ENCODE measurements at regions of chr1 and their contacts with region 1.

Region 1: DNA sequence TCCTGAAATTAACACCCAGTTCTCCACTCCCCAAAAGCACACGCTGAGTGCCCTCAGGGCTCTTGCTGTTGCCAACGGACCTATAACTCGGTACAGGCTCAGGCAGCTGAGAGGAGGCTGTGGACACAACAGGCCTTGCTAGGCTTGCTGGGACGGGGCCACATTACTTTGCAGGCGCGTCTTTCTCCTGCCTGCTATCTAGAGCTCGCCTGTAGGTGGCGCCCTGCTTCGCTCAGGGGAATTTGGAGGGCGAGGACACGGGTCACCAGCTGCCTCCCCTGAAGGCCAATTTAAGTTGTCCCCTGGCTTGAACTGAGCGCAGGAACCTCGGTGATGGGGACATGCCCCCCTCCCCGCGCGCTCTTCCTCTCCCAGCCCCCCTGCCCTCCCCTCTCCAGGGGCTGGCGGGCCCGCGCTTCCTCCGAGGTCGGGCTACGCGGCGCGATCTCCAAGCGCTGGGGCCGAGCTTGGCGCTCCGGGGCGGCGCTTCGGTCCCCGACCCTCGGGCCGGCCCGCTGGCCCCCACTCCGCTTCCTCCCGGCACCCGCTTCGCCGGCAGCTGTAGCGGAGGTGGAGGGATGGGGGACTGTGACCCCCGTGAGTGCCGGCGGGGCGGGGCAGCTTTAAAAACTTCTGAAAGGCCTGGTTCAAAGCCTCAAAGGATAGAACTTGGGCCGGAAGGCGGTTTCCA is 32.4 kb upstream of the NFIA start:
- DNase-seq: peak; percentile 81 to 94 (median 88)
- ATAC-seq: peak; percentile 79
- H3K4me3 ChIP-seq: peak overlapping the region; percentile 65 to 73
- H3K4me3 Mint-ChIP-seq: peak overlapping the region; percentile 84
- H3K27ac ChIP-seq: no peak overlapping the region
- H3K27ac Mint-ChIP-seq: no peak overlapping the region
- H3K4me1 ChIP-seq: peaks cover 22% of the 10 kb centered on the region
- H3K4me1 Mint-ChIP-seq: peaks cover 28% of the 10 kb centered on the region
- H3K27me3 ChIP-seq: peaks cover 0 to 6% of the 10 kb centered on the region in 2 experiments
- H3K27me3 Mint-ChIP-seq: peaks cover 31% of the 10 kb centered on the region
- CTCF ChIP-seq: peak; percentile 86

Region 2: GRCh38 chr1:59814180-59814900 is 1235.7 kb before region 1 on chr1:
- CTCF ChIA-PET with region 1: no interaction called
- POLR2A ChIA-PET with region 1: no interaction called
- intact Hi-C with region 1: loop called in 1 of 2 experiments (anchors 10 kb)
- DNase-seq: peak; percentile 73 to 97 (median 88)
- ATAC-seq: peak; percentile 94
- H3K4me3 ChIP-seq: peak overlapping the region; percentile 64 to 72
- H3K4me3 Mint-ChIP-seq: no peak overlapping the region
- H3K27ac ChIP-seq: peak overlapping the region; percentile 43 to 59
- H3K27ac Mint-ChIP-seq: peak overlapping the region; percentile 89
- H3K4me1 ChIP-seq: peaks cover 15% of the 10 kb centered on the region
- H3K4me1 Mint-ChIP-seq: peaks cover 4% of the 10 kb centered on the region
- H3K27me3 ChIP-seq: peaks cover 0 to 4% of the 10 kb centered on the region in 2 experiments
- H3K27me3 Mint-ChIP-seq: peaks cover 7% of the 10 kb centered on the region
- CTCF ChIP-seq: no peak

Region 3: DNA sequence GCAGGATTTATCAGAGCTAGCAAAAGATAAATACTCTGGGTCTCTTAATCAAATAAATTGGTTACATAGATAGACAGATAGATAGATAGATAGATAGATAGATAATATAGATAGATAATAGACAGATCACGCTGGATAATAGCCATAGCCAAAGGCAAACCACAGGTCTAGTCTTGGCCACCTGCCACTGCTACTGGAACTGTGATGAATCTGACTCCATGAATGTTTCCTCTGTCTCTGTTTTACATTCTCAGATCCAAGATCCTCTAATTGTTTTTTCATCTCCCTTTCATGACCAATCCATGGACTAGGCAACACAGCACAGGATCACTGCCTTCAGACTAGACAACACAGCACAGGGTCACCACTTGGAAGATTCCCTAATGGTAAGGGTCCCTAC is 412.3 kb before region 1 on chr1:
- CTCF ChIA-PET with region 1: no interaction called
- POLR2A ChIA-PET with region 1: no interaction called
- intact Hi-C with region 1: no loop called
- DNase-seq: no peak
- ATAC-seq: no peak
- H3K4me3 ChIP-seq: no peak overlapping the region
- H3K4me3 Mint-ChIP-seq: no peak overlapping the region
- H3K27ac ChIP-seq: no peak overlapping the region
- H3K27ac Mint-ChIP-seq: no peak overlapping the region
- H3K4me1 ChIP-seq: no peaks in the 10 kb centered on the region
- H3K4me1 Mint-ChIP-seq: no peaks in the 10 kb centered on the region
- H3K27me3 ChIP-seq: no peaks in the 10 kb centered on the region
- H3K27me3 Mint-ChIP-seq: peaks cover 8% of the 10 kb centered on the region
- CTCF ChIP-seq: no peak

Region 4: GRCh38 chr1:61067404-61068019 is 17.5 kb after region 1 on chr1:
- CTCF ChIA-PET with region 1: interaction called, 15 read pairs
- POLR2A ChIA-PET with region 1: interaction called, 3 read pairs
- intact Hi-C with region 1: no loop called
- DNase-seq: no peak
- ATAC-seq: no peak
- H3K4me3 ChIP-seq: no peak overlapping the region
- H3K4me3 Mint-ChIP-seq: no peak overlapping the region
- H3K27ac ChIP-seq: no peak overlapping the region
- H3K27ac Mint-ChIP-seq: no peak overlapping the region
- H3K4me1 ChIP-seq: no peaks in the 10 kb centered on the region
- H3K4me1 Mint-ChIP-seq: no peaks in the 10 kb centered on the region
- H3K27me3 ChIP-seq: no peaks in the 10 kb centered on the region
- H3K27me3 Mint-ChIP-seq: peaks cover 3% of the 10 kb centered on the region
- CTCF ChIP-seq: no peak

Region 5: GRCh38 chr1:61097317-61097716 is 47.3 kb after region 1 on chr1:
- CTCF ChIA-PET with region 1: interaction called, 12 read pairs
- POLR2A ChIA-PET with region 1: no interaction called
- intact Hi-C with region 1: no loop called
- DNase-seq: no peak
- ATAC-seq: no peak
- H3K4me3 ChIP-seq: no peak overlapping the region
- H3K4me3 Mint-ChIP-seq: no peak overlapping the region
- H3K27ac ChIP-seq: no peak overlapping the region
- H3K27ac Mint-ChIP-seq: no peak overlapping the region
- H3K4me1 ChIP-seq: no peaks in the 10 kb centered on the region
- H3K4me1 Mint-ChIP-seq: peaks cover 17% of the 10 kb centered on the region
- H3K27me3 ChIP-seq: no peaks in the 10 kb centered on the region
- H3K27me3 Mint-ChIP-seq: no peaks in the 10 kb centered on the region
- CTCF ChIP-seq: no peak

Region 6: DNA sequence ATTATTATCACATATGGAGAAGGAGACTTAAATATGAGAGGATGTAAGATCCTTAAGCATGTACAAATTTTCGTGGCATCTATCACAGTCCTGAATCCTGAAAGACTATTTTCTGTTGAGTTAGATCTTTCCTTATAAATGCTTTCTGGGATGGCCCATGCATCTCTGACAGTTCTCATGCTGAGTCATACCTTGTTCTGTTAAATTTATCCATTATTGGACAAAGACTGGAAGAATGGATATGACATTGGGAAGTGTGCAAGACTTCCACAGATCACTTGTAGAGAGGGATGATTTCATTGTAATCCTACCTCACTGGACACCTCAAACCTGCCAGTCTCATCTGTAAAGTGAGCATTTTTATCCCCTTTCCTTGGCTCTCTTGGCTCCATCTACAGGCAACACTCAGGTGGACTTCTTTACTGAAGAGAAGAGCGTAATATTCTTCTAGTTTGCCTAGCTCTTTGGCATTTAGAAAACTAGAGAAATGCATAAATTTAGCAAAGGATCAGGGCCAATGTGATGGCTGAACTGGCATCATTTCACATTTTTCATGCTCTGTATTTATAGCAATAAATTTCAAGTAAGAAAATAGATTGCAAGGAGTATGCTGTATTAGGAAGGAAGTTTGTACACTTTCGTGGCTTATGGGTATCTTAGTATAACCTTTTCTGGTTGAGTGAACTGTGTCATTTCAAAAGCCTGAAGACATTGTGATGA is 160.6 kb after region 1 on chr1:
- CTCF ChIA-PET with region 1: interaction called, 42 read pairs
- POLR2A ChIA-PET with region 1: interaction called, 4 read pairs
- intact Hi-C with region 1: loop called (anchors 1 kb)
- DNase-seq: peak in 2 of 9 experiments; percentile 14 to 38
- ATAC-seq: no peak
- H3K4me3 ChIP-seq: no peak overlapping the region
- H3K4me3 Mint-ChIP-seq: no peak overlapping the region
- H3K27ac ChIP-seq: no peak overlapping the region
- H3K27ac Mint-ChIP-seq: no peak overlapping the region
- H3K4me1 ChIP-seq: no peaks in the 10 kb centered on the region
- H3K4me1 Mint-ChIP-seq: no peaks in the 10 kb centered on the region
- H3K27me3 ChIP-seq: no peaks in the 10 kb centered on the region
- H3K27me3 Mint-ChIP-seq: no peaks in the 10 kb centered on the region
- CTCF ChIP-seq: peak; percentile 10

Region 7: DNA sequence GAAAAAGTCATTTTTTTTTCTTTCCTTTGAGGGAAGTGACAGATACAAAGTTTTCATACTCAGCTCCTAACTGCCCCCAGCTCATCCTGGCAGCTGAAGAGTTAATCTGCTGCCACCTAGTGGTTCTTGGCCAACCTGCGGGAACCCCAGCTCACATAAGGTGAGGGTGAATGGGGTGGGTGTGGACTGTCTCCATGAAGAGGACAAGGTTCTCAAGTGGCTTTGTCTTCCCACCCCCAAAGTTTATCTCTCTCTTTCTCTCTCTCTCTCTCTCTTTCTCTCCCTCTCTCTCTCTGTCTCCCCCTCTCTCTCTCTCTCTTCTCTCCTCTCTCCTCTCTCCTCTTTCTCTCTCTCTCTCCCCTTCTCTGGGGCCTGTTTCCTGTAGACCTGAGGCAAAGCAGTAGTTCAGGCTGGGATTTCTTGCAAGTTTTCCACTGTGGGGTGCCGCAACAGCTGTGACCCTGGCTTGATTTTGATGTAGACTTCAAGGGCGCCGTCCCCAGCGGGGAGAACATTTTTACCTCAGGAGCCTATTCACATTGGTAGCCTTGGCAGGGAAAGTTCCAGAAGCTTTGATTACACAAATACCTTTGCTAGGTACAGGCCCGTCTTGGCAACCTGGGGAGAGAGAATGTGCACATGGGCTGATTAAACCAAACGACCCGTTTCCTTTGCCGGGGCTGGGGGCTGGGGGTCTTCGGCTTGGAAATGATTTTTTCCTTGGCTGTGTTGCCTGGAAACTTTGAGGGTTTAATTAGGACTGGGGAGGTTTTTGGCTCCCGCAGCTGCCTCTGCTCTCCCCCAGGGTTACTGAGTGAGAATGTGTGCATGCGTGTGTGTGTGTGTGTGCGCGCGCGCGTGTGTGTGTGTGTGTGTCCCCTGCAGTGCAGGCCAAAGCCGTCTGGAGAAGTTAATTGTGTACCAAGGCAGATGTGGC is 539.0 kb after region 1 on chr1:
- CTCF ChIA-PET with region 1: interaction called, 12 read pairs
- POLR2A ChIA-PET with region 1: no interaction called
- intact Hi-C with region 1: loop called in 1 of 2 experiments (anchors 2 kb)
- DNase-seq: peak; percentile 14 to 62 (median 39)
- ATAC-seq: peak; percentile 69
- H3K4me3 ChIP-seq: no peak overlapping the region
- H3K4me3 Mint-ChIP-seq: no peak overlapping the region
- H3K27ac ChIP-seq: no peak overlapping the region
- H3K27ac Mint-ChIP-seq: no peak overlapping the region
- H3K4me1 ChIP-seq: no peaks in the 10 kb centered on the region
- H3K4me1 Mint-ChIP-seq: no peaks in the 10 kb centered on the region
- H3K27me3 ChIP-seq: no peaks in the 10 kb centered on the region
- H3K27me3 Mint-ChIP-seq: peaks cover 8% of the 10 kb centered on the region
- CTCF ChIP-seq: peak; percentile 62

Region 8: GRCh38 chr1:61724813-61725694 is 675.1 kb after region 1 on chr1 and contains the start of gene TM2D1:
- CTCF ChIA-PET with region 1: no interaction called
- POLR2A ChIA-PET with region 1: no interaction called
- intact Hi-C with region 1: loop called in 1 of 2 experiments (anchors 10 kb)
- DNase-seq: peak; percentile 66 to 92 (median 84)
- ATAC-seq: peak; percentile 91
- H3K4me3 ChIP-seq: peak within 1 kb of the TSS; percentile 85 to 93
- H3K4me3 Mint-ChIP-seq: peak within 1 kb of the TSS; percentile 96
- H3K27ac ChIP-seq: peak within 1 kb of the TSS; percentile 85 to 89
- H3K27ac Mint-ChIP-seq: peak within 1 kb of the TSS; percentile 96
- H3K4me1 ChIP-seq: peaks cover 21% of the 10 kb centered on the region
- H3K4me1 Mint-ChIP-seq: peaks cover 34% of the 10 kb centered on the region
- H3K27me3 ChIP-seq: no peaks in the 10 kb centered on the region
- H3K27me3 Mint-ChIP-seq: no peaks in the 10 kb centered on the region
- CTCF ChIP-seq: no peak
- total RNA-seq, gene TM2D1: 12.7 to 14.8 TPM